Esophagus muscularis mucosa (tissue), 4 donors: ENCODE measurements at regions of chr6 and their contacts with region 1.

Region 1: GRCh38 chr6:93419304-93420162 is at the start of gene EPHA7:
- DNase-seq: peak; percentile 96
- H3K4me3 ChIP-seq: peak within 1 kb of the TSS; percentile 77 to 92 (median 82)
- H3K27ac ChIP-seq: peak within 1 kb of the TSS; percentile 81 to 86 (median 82)
- H3K4me1 ChIP-seq: peaks cover 17 to 59% (median 51%) of the 10 kb centered on the region in 4 donors
- H3K27me3 ChIP-seq: peaks cover 0 to 19% (median 0%) of the 10 kb centered on the region in 4 donors
- CTCF ChIP-seq: no peak
- EP300 ChIP-seq: no peak
- POLR2A ChIP-seq: peak; percentile 24
- total RNA-seq, gene EPHA7: 158 to 262 (median 219) TPM

Region 2: GRCh38 chr6:92810913-92811312 is 608.6 kb before region 1 on chr6:
- intact Hi-C with region 1: loop called (anchors 5 kb)
- DNase-seq: no peak
- H3K4me3 ChIP-seq: no peak overlapping the region
- H3K27ac ChIP-seq: no peak overlapping the region
- H3K4me1 ChIP-seq: peaks cover 0 to 5% (median 0%) of the 10 kb centered on the region in 4 donors
- H3K27me3 ChIP-seq: no peaks in the 10 kb centered on the region
- CTCF ChIP-seq: peak; percentile 38 to 64 (median 49)
- EP300 ChIP-seq: no peak
- POLR2A ChIP-seq: no peak

Region 3: DNA sequence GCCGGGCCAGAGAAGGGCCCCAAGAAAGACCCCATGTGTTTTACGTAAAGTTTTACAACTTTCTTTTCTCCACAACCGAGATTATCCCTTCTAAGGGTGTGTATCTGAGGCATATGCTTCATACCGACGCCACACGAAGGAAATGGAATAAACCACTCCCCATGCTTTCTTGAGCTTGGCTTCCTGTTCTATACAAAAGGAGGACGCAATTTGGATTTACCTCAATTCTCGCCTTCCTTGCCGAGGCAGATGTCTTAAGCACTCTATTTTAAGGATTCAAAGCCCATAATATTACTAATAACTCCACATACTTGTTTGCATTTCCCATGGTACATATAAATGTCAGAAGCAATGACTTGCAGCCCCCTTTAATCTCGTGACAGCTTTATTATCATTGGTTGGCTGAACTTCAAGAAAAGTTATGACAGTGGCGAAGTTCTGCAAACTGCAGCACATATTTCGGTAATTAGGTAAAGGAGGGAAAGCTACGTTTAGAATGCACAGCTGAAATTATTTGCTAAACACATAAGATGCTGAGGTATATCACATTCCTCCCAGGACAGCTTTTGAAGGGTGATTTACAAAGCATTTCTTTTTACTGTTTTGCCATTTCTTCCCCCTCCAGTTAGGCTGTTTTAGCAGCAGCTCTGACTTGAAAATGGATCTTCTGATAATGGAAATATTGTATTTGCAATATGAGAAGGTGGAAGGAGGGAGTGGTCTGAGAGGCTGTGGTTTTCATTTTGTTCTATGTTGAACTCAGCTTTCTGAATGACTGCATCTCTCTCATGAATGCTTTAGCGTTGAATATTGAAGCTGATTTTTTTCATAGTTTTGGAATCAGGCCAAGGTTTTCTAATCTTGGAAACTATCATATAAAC is 330.7 kb before region 1 on chr6:
- intact Hi-C with region 1: loop called (anchors 10 kb)
- DNase-seq: no peak
- H3K4me3 ChIP-seq: peak overlapping the region; percentile 23 to 33 (median 28)
- H3K27ac ChIP-seq: peak overlapping the region; percentile 37 to 64 (median 52)
- H3K4me1 ChIP-seq: peaks cover 0 to 40% (median 27%) of the 10 kb centered on the region in 4 donors
- H3K27me3 ChIP-seq: no peaks in the 10 kb centered on the region
- CTCF ChIP-seq: no peak
- EP300 ChIP-seq: no peak
- POLR2A ChIP-seq: no peak

Region 4: DNA sequence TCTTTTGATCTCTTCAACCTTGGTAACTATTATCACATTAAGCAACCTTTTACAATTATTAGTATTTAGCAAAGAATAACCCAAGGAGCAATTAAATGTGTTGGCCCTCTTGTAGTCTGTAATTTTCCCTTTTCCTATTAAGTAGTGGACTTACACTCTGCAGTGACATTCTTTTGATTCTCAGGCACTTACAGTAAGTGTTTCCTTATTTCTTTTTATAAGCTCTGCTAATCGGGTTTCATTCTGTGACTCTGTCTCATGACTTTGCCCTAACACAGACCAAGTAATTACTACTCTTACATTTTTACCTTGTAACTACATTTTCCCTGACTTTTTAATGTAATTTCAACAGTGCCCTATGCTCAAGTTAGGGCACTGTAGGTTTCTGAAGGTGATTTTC is 103.8 kb after region 1 on chr6:
- intact Hi-C with region 1: no loop called
- DNase-seq: no peak
- H3K4me3 ChIP-seq: no peak overlapping the region
- H3K27ac ChIP-seq: no peak overlapping the region
- H3K4me1 ChIP-seq: peaks cover 0 to 4% (median 0%) of the 10 kb centered on the region in 4 donors
- H3K27me3 ChIP-seq: no peaks in the 10 kb centered on the region
- CTCF ChIP-seq: no peak
- EP300 ChIP-seq: no peak
- POLR2A ChIP-seq: no peak

Region 5: GRCh38 chr6:93567164-93567563 is 147.6 kb after region 1 on chr6:
- intact Hi-C with region 1: loop called (anchors 5 kb)
- DNase-seq: no peak
- H3K4me3 ChIP-seq: no peak overlapping the region
- H3K27ac ChIP-seq: peak overlapping the region; percentile 75 to 85 (median 84)
- H3K4me1 ChIP-seq: peaks cover 0 to 58% (median 43%) of the 10 kb centered on the region in 4 donors
- H3K27me3 ChIP-seq: no peaks in the 10 kb centered on the region
- CTCF ChIP-seq: no peak
- EP300 ChIP-seq: no peak
- POLR2A ChIP-seq: no peak

Region 6: GRCh38 chr6:93779086-93779841 is 359.7 kb after region 1 on chr6:
- intact Hi-C with region 1: loop called (anchors 10 kb)
- DNase-seq: no peak
- H3K4me3 ChIP-seq: no peak overlapping the region
- H3K27ac ChIP-seq: no peak overlapping the region
- H3K4me1 ChIP-seq: peaks cover 7 to 14% (median 10%) of the 10 kb centered on the region in 4 donors
- H3K27me3 ChIP-seq: no peaks in the 10 kb centered on the region
- CTCF ChIP-seq: no peak
- EP300 ChIP-seq: no peak
- POLR2A ChIP-seq: no peak

Region 7: GRCh38 chr6:94052754-94053153 is 633.2 kb after region 1 on chr6:
- intact Hi-C with region 1: loop called (anchors 10 kb)
- DNase-seq: no peak
- H3K4me3 ChIP-seq: no peak overlapping the region
- H3K27ac ChIP-seq: no peak overlapping the region
- H3K4me1 ChIP-seq: no peaks in the 10 kb centered on the region
- H3K27me3 ChIP-seq: no peaks in the 10 kb centered on the region
- CTCF ChIP-seq: peak; percentile 21 to 43 (median 33)
- EP300 ChIP-seq: no peak
- POLR2A ChIP-seq: no peak